ENCODE measurements at regions of chr9 and their contacts with region 1.

Region 1: DNA sequence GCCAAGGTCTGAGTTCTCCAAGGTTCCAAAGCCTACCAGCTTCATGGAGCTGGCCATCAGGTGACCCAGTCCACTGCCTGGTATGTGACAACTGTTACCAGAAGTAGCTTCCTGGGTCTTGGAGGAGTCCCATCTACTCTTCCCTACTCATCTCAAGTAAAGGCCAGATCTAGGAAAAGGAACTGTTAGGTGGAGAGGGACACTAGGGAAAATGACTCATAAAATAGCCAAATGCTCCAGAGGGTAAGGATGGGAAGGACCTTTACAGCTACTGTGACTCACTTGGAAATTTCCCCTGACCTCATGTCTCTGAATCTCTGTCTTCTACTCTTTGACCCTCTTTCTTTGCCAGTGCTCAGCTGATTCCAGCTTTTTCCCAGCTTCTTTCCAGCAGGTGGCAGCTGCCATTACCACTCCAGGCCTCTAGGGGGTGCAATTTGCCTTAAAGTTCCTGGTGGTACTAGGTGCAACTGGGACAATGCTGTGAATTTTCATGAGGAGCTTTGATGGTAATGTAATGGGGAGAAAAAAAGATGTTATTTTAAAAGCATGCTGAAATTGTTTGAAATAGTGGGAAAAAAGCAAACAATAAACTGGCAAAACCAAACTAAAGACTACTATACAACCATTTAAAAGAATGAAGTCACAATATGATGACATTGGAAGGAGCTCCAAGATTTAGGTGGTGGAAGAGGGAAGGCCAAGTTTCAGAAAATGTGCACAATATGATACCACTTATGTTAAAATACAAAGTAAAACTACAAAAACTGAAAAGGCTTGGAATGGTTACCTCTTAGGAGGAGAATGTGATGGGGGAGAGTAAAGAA is 27.1 kb upstream of the MYORG start:
- DNase-seq: peak; percentile 78
- H3K4me3 ChIP-seq: peak overlapping the region in 1 of 2 experiments; percentile 44; a peak in 1 of 4 replicates
- H3K27ac ChIP-seq: no peak overlapping the region
- H3K4me1 ChIP-seq: peaks cover 0 to 12% of the 10 kb centered on the region in 2 experiments; a peak in 1 of 4 replicates
- H3K27me3 ChIP-seq: no peaks in the 10 kb centered on the region
- CTCF ChIP-seq: peak; percentile 99
- EP300 ChIP-seq: no peak
- RAD21 ChIP-seq: peak; percentile 99

Region 2: DNA sequence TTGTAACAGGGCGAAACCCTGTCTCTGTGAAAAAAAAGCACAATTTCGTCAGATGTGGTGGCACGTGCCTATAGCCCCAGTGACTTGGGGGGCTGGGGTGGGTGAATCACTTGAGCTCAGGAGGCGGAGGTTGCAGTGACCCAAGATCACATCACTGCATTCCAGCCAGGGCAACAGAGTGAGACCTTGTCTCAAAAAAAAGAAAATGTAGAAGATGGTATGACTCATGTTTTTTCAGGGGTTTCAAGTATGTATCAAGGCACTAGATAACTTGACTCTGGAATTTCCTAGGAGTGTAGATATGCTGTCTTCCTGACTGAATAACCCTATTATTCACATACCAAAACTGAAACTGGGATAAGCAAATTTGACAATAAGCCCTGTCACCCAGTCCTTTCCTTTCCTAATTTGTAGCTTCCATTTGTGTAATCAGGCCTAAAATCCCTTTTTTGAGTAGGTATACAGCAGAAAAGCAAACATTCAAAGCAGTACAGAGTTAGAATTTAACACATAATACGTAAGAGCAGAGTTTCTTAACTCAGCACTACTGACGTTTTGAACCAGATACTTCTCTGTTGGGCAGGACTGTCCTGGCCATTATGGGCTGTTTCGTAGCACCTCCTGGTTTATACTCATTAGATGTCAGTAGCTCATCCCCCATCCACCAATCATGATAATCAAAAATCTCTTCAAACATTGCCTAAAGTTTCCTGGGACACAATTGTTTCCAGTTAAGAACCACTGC is 897.0 kb before region 1 on chr9:
- CTCF ChIA-PET with region 1: no interaction called
- POLR2A ChIA-PET with region 1: no interaction called
- DNase-seq: no peak
- H3K4me3 ChIP-seq: peak overlapping the region; percentile 32 to 48; a peak in 3 of 4 replicates
- H3K27ac ChIP-seq: peak overlapping the region; percentile 67 to 98; a peak in 3 of 4 replicates
- H3K4me1 ChIP-seq: peaks cover 0 to 10% of the 10 kb centered on the region in 2 experiments
- H3K27me3 ChIP-seq: no peaks in the 10 kb centered on the region
- CTCF ChIP-seq: no peak
- EP300 ChIP-seq: peak in 1 of 2 experiments; percentile 77; a peak in 2 of 4 replicates
- RAD21 ChIP-seq: no peak

Region 3: DNA sequence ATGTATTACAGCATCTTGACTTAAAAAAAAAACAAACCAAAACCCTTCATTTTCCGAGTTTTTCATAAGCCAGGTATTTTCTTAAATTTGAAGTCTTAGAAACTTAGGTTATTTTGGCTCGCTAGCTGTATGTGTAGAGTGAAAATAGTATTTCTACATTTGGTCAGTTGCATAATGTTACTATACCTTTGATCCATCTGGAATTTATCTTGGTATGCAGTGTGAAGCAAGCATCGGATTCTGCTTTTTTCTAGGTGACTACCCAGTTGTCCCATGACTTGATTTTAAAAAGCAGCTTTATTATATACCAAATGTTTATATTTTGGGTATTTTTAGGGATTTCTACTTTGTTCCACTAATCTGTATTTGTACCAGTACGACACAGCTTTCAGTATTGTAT is 197.2 kb before region 1 on chr9:
- CTCF ChIA-PET with region 1: no interaction called
- POLR2A ChIA-PET with region 1: no interaction called
- DNase-seq: no peak
- H3K4me3 ChIP-seq: no peak overlapping the region
- H3K27ac ChIP-seq: no peak overlapping the region
- H3K4me1 ChIP-seq: no peaks in the 10 kb centered on the region
- H3K27me3 ChIP-seq: no peaks in the 10 kb centered on the region
- CTCF ChIP-seq: no peak
- EP300 ChIP-seq: no peak
- RAD21 ChIP-seq: no peak

Region 4: GRCh38 chr9:34376596-34377403 is 27.0 kb before region 1 on chr9 and contains the start of gene MYORG:
- CTCF ChIA-PET with region 1: interaction called, 22 read pairs
- POLR2A ChIA-PET with region 1: no interaction called
- DNase-seq: peak; percentile 98
- H3K4me3 ChIP-seq: peak within 1 kb of the TSS; percentile 83 to 84
- H3K27ac ChIP-seq: peak within 1 kb of the TSS in 1 of 2 experiments; percentile 76; a peak in 2 of 4 replicates
- H3K4me1 ChIP-seq: peaks cover 7 to 40% of the 10 kb centered on the region in 2 experiments; a peak in 3 of 4 replicates
- H3K27me3 ChIP-seq: no peaks in the 10 kb centered on the region
- CTCF ChIP-seq: no peak
- EP300 ChIP-seq: no peak
- RAD21 ChIP-seq: no peak
- polyA plus RNA-seq, gene MYORG: 0.97 and 1.1 TPM in 2 replicates

Region 5: DNA sequence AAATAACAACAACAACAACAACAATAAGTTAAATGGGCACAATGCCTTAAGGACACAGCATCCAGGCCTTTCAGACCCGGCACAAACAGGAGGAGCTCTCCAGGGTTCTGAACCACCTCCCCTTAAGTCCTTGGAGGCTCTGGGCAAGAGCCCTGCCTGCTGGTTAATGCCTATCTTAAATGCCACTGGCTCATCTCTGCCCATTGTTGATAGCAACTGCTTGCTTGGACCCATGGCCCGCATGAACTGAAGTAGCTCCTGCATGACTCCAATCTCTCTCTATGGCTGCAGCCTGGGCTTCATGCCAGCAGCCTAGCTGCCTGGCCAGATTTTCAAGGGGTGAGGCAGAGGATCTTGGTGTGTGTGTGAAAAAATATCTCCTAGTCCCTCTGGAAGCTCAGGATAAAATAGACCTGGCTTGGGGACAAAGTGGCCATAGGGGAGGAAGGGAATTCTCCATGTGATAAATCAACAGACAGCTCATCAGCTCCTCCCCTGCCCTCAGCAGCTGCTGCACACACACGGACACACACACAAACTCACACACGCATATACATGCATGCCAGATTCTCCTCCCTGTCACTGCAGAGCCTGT is 27.2 kb after region 1 on chr9:
- CTCF ChIA-PET with region 1: interaction called, 132 read pairs
- POLR2A ChIA-PET with region 1: interaction called, 6 read pairs
- DNase-seq: peak; percentile 79
- H3K4me3 ChIP-seq: no peak overlapping the region
- H3K27ac ChIP-seq: peak overlapping the region in 1 of 2 experiments; percentile 78; a peak in 2 of 4 replicates
- H3K4me1 ChIP-seq: peaks cover 4 to 63% of the 10 kb centered on the region in 2 experiments; a peak in 3 of 4 replicates
- H3K27me3 ChIP-seq: no peaks in the 10 kb centered on the region
- CTCF ChIP-seq: no peak
- EP300 ChIP-seq: peak in 1 of 2 experiments; percentile 71; a peak in 1 of 4 replicates
- RAD21 ChIP-seq: peak; percentile 21; the same call in 1 of the 2 replicates

Region 6: GRCh38 chr9:34458013-34458958 is 54.5 kb after region 1 on chr9 and contains the starts of genes DNAI1 and FAM219A:
- CTCF ChIA-PET with region 1: interaction called, 28 read pairs
- POLR2A ChIA-PET with region 1: interaction called, 4 read pairs
- DNase-seq: peak; percentile 99
- H3K4me3 ChIP-seq: peak within 1 kb of the TSS; percentile 76 to 77
- H3K27ac ChIP-seq: peak within 1 kb of the TSS; percentile 61 to 82
- H3K4me1 ChIP-seq: peaks cover 20 to 21% of the 10 kb centered on the region in 2 experiments; a peak in 2 of 4 replicates
- H3K27me3 ChIP-seq: no peaks in the 10 kb centered on the region
- CTCF ChIP-seq: no peak
- EP300 ChIP-seq: no peak
- RAD21 ChIP-seq: no peak
- polyA plus RNA-seq, gene DNAI1: 0.46 and 0.55 TPM in 2 replicates
- polyA plus RNA-seq, gene FAM219A: 15.7 and 18.5 TPM in 2 replicates

Region 7: DNA sequence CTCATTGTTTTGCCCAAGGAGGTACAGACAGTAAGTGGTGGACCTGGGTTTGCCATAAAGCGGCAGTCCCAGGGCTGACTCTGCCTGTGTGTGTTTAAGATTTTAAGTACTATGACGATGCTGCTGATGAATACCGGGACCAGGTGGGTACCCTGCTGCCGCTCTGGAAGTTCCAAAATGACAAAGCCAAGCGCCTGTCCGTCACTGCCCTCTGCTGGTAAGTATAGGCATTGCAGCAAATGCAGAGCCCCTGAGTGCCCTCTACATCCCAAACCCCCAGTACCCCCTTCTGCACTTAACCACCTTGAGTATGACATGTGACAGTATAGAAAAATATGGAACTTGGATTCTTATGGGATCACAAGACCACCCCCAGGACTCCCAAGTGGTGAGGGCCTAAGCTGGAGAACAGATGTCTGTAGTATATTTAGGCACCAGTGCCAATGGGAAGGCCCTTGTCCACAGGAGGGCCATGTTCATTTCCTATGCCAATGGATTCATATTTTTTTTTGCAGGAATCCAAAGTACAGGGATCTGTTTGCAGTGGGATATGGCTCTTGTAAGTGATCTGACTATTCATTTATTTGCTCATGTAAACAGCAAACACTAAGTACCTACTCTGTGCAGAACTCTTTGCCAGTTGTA is 97.0 kb after region 1 on chr9:
- CTCF ChIA-PET with region 1: interaction called, 155 read pairs
- POLR2A ChIA-PET with region 1: no interaction called
- DNase-seq: peak; percentile 79
- H3K4me3 ChIP-seq: no peak overlapping the region
- H3K27ac ChIP-seq: no peak overlapping the region
- H3K4me1 ChIP-seq: peaks cover 0 to 6% of the 10 kb centered on the region in 2 experiments; a peak in 1 of 4 replicates
- H3K27me3 ChIP-seq: no peaks in the 10 kb centered on the region
- CTCF ChIP-seq: peak; percentile 97
- EP300 ChIP-seq: no peak
- RAD21 ChIP-seq: peak; percentile 93

Region 8: GRCh38 chr9:34522971-34523797 is 119.4 kb after region 1 on chr9 and contains the start of gene ENHO:
- CTCF ChIA-PET with region 1: interaction called, 11 read pairs
- POLR2A ChIA-PET with region 1: no interaction called
- DNase-seq: peak; percentile 99
- H3K4me3 ChIP-seq: peak within 1 kb of the TSS; percentile 50 to 53
- H3K27ac ChIP-seq: peak within 1 kb of the TSS in 1 of 2 experiments; percentile 36; a peak in 1 of 4 replicates
- H3K4me1 ChIP-seq: peaks cover 0 to 15% of the 10 kb centered on the region in 2 experiments; a peak in 1 of 4 replicates
- H3K27me3 ChIP-seq: no peaks in the 10 kb centered on the region
- CTCF ChIP-seq: no peak
- EP300 ChIP-seq: no peak
- RAD21 ChIP-seq: no peak
- polyA plus RNA-seq, gene ENHO: 1.2 and 1.5 TPM in 2 replicates